ENCODE measurements at regions of chr7 and their contacts with region 1.

Region 1: DNA sequence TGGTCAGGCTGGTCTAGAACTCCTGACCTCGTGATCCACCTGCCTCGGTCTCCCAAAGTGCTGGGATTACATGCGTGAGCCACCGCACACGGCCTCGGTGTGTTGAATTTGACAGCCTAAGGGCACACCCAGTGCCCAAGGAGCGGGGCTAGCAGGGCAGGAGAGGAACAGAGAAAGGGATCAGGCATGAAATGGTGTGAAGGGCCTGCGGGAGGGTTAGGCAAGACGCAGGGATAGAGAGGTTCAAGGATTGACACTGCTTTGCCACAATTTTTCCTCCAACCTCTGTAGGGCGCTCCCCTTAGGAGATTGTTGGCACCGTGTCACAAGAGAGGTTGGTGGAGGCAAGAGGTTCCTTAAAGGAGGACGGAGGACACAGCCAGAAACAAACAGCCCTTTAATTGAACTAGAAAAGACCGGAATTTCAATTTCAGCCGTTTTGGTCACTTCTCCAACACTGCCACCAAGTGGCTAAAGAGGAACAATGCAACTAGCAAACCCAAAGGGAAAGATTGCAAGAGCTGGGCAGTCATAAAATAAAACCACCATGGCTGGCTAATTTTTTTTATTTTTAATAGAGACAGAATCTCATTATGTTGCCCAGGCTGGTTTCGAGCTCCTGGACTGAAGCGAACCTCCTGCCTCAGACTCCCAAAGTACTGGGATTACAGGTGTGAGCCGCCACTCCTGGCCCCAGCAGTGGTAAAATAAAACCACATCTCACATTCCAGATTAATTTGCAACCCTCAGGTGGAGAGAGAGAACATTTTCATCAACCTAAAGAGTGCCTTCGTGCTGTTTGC is 6.9 kb upstream of the CREB3L2 start:
- DNase-seq: peak; percentile 57
- CTCF ChIP-seq: peak; percentile 78

Region 2: GRCh38 chr7:137992550-137993394 is 16.0 kb before region 1 on chr7:
- CTCF ChIA-PET with region 1: interaction called, 219 read pairs
- POLR2A ChIA-PET with region 1: no interaction called
- DNase-seq: no peak
- CTCF ChIP-seq: no peak